Panc1 (cell line): ENCODE measurements at regions of chr1 and their contacts with region 1.

Region 1: GRCh38 chr1:206117151-206117948 is at the start of gene AVPR1B:
- DNase-seq: no peak
- ATAC-seq: peak; percentile 89
- H3K4me3 ChIP-seq: peak within 1 kb of the TSS; percentile 33 to 37
- H3K27ac ChIP-seq: no peak within 1 kb of the TSS
- H3K4me1 ChIP-seq: peaks cover 4% of the 10 kb centered on the region; the same call in 1 of the 2 replicates
- H3K27me3 ChIP-seq: peaks cover 15% of the 10 kb centered on the region
- CTCF ChIP-seq: no peak; the same call in 1 of the 2 replicates
- total RNA-seq, gene AVPR1B: not detected

Region 2: DNA sequence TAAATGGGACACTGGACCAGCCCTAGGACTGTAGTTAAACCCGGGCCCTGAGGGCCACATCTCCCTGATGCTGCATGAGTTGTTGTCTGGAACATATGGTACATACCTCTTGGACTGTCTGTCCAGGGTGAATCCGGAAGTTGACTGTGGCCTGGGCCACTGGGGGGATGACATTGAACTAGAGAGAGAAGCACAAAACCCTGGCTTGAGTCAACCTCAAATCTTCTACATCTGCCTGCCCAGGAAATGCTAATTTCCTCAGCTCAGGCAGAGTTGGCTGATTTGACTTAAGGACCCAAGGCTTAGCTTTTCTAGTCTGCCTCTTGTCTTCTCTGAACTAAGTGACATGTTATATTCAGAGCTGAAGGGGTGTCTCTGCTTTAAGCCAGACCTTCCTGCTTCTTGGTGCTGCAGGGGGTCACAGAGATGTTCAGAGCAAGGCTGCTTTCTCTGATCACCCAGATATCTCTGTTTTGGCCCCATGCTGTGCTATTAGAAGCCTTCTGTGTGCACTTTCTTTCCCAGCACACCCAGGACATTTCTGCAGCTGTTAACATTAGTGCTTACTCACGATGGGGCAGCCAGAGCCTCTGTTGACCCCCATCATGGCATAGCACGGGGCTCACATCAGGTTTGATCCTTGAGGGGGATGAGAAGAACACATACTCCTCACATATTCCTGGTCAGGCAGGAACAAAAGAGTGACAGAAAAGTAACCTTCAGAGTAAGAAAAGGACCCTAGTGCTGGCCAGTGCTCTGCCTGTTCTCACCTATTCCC is 277.0 kb before region 1 on chr1:
- CTCF ChIA-PET with region 1: no interaction called
- POLR2A ChIA-PET with region 1: no interaction called
- in situ Hi-C with region 1: no loop called
- intact Hi-C with region 1: no loop called
- DNase-seq: no peak
- ATAC-seq: no peak
- H3K4me3 ChIP-seq: no peak overlapping the region
- H3K27ac ChIP-seq: no peak overlapping the region
- H3K4me1 ChIP-seq: no peaks in the 10 kb centered on the region
- H3K27me3 ChIP-seq: peaks cover 4% of the 10 kb centered on the region; the same call in 1 of the 2 replicates
- CTCF ChIP-seq: no peak

Region 3: GRCh38 chr1:206133751-206134415 is 16.5 kb after region 1 on chr1:
- CTCF ChIA-PET with region 1: interaction called, 11 read pairs
- POLR2A ChIA-PET with region 1: no interaction called
- in situ Hi-C with region 1: no loop called
- intact Hi-C with region 1: no loop called
- DNase-seq: no peak
- ATAC-seq: no peak
- H3K4me3 ChIP-seq: no peak overlapping the region
- H3K27ac ChIP-seq: no peak overlapping the region
- H3K4me1 ChIP-seq: no peaks in the 10 kb centered on the region
- H3K27me3 ChIP-seq: peaks cover 8% of the 10 kb centered on the region
- CTCF ChIP-seq: no peak